OCI-LY7 (cell line): ENCODE measurements at regions of chr5 and their contacts with region 1.

Region 1: GRCh38 chr5:78727786-78728761 is 79.5 kb upstream of the LHFPL2 start:
- DNase-seq: peak; percentile 97
- H3K4me3 ChIP-seq: peak overlapping the region; percentile 53
- H3K27ac ChIP-seq: peak overlapping the region; percentile 99
- H3K4me1 ChIP-seq: peaks cover 94% of the 10 kb centered on the region
- CTCF ChIP-seq: no peak

Region 2: DNA sequence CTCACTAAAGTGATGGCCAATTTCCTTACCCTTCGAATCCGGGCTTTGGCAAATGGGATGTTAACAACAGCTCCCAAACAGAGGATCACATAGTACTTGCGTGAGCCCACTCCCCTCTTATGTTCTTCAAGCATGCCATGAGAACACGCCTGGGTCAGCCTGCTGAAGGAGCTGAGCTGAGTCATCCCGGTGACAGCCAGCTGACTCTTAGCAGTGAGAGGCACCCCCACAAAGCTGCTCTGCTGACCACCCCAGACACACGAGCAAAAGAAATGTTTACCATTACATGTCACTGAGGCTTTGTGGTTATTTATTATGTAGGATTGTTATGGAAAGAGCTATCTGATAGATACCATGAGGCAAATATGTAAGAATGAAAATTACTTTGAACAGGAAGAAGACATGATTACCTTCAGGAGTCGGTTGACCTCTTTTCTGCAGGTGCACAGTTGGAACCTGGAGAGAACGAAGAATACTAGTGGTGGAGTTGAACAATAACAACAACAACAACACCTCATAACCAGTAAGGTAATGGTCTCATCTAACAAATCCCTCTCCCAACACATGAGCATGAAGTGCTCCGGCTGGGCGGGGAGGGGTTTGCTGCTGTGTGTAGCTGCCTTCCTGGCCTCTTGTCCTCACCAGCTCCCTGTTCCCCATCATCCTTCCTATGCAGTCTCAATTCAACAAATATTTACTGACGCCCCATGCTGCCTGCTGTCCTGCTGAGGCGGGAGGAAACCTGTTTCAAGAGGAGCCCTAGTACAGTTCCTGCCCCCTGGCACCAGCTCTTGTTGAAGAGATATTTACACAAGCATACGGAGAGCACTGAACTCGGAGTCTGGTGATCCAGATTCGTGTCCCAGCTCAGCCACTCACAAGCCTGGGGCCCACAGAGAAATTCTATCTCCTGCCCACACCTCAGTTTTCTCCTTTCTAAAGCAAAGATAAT is 10.1 kb before region 1 on chr5:
- CTCF ChIA-PET with region 1: no interaction called
- POLR2A ChIA-PET with region 1: interaction called, 60 read pairs
- intact Hi-C with region 1: loop called (anchors 1 kb)
- DNase-seq: peak; percentile 40
- H3K4me3 ChIP-seq: peak overlapping the region; percentile 71
- H3K27ac ChIP-seq: peak overlapping the region; percentile 99
- H3K4me1 ChIP-seq: peaks cover 71% of the 10 kb centered on the region
- CTCF ChIP-seq: no peak

Region 3: DNA sequence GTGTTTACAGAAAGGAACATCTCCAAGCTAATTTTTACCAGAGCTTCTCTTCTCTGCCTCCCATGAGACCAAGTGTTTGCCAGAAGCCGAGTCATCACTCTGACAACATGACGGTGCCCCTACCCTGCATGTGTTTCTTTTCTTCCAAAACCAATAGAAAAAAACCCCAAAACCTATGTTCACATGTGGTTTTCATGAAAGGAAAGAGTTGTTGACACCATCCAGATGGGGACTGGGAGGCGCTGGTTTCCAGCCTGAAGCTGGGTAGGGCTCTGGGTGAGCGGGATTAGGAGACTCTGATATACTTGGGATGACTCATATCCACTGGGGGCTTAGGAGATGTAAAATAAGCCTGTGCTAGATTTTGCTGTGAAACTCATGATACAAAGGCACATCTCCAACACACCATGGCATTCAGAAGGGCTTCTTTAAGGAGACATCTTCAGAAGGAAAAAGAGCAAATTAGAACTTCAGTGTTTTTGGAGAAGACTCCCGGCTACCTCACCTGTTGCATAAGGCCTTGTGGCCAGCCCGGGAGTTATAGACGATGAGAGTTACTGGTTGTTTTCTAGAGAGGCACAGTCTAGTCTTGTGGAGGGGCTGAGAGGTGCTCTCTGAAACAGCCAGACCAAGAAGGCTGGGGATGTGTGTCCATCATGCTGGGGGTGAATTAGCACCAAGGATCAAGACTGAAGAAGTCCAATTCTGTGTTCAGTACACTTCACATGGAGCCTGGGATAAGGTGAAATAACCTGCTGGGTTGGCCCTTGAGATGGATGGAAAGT is 29.4 kb after region 1 on chr5:
- CTCF ChIA-PET with region 1: no interaction called
- POLR2A ChIA-PET with region 1: interaction called, 14 read pairs
- intact Hi-C with region 1: loop called (anchors 2 kb)
- DNase-seq: no peak
- H3K4me3 ChIP-seq: no peak overlapping the region
- H3K27ac ChIP-seq: peak overlapping the region; percentile 57
- H3K4me1 ChIP-seq: peaks cover 89% of the 10 kb centered on the region
- CTCF ChIP-seq: no peak

Region 4: GRCh38 chr5:78783434-78784130 is 55.5 kb after region 1 on chr5:
- CTCF ChIA-PET with region 1: no interaction called
- POLR2A ChIA-PET with region 1: no interaction called
- intact Hi-C with region 1: no loop called
- DNase-seq: no peak
- H3K4me3 ChIP-seq: no peak overlapping the region
- H3K27ac ChIP-seq: no peak overlapping the region
- H3K4me1 ChIP-seq: no peaks in the 10 kb centered on the region
- CTCF ChIP-seq: no peak

Region 5: DNA sequence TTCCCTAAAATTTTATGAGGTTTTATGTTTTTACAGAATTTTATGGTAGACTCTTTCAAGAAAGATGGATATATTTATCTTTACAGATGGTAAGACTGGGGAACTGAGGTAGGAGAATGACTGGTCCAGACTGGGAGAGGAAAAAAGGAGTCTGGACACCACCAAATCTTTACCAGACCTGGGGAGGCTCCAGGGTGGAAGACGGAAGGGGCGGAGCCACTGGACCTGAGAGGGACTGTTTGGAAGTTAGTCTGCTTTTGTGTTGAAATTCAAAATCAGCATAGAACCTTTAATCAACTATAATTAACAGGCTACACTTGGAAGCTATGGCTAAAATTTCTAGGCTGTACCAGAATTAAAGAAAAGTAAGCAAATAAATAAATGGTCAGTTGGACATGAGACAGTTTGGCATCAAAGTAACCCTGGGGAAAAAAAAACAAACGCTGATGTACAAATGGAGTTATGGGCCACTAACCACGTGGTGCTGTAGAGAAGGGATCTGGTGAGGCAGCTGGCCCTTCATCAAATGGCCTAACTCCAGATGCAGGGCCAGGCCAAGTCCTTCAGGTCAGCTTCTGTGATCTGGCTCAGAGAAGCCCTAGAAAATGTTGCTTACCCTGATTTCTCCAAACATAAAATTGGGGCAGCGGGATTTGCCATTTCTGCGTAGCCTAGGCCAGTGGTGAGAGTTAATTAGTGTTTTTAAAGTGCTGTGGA is 101.9 kb after region 1 on chr5:
- CTCF ChIA-PET with region 1: no interaction called
- POLR2A ChIA-PET with region 1: interaction called, 5 read pairs
- intact Hi-C with region 1: loop called (anchors 5 kb)
- DNase-seq: no peak
- H3K4me3 ChIP-seq: no peak overlapping the region
- H3K27ac ChIP-seq: no peak overlapping the region
- H3K4me1 ChIP-seq: peaks cover 30% of the 10 kb centered on the region
- CTCF ChIP-seq: no peak

Region 6: GRCh38 chr5:78886341-78887230 is 158.5 kb after region 1 on chr5:
- CTCF ChIA-PET with region 1: no interaction called
- POLR2A ChIA-PET with region 1: no interaction called
- intact Hi-C with region 1: loop called (anchors 2 kb)
- DNase-seq: peak; percentile 44
- H3K4me3 ChIP-seq: no peak overlapping the region
- H3K27ac ChIP-seq: peak overlapping the region; percentile 39
- H3K4me1 ChIP-seq: peaks cover 28% of the 10 kb centered on the region
- CTCF ChIP-seq: peak; percentile 97

Region 7: GRCh38 chr5:80181618-80182211 is 1453.6 kb after region 1 on chr5:
- CTCF ChIA-PET with region 1: no interaction called
- POLR2A ChIA-PET with region 1: no interaction called
- intact Hi-C with region 1: loop called (anchors 10 kb)
- DNase-seq: peak; percentile 95
- H3K4me3 ChIP-seq: peak overlapping the region; percentile 42
- H3K27ac ChIP-seq: peak overlapping the region; percentile 98
- H3K4me1 ChIP-seq: peaks cover 88% of the 10 kb centered on the region
- CTCF ChIP-seq: no peak